BJ (cell line): ENCODE measurements at regions of chr6 and their contacts with region 1.

Region 1: DNA sequence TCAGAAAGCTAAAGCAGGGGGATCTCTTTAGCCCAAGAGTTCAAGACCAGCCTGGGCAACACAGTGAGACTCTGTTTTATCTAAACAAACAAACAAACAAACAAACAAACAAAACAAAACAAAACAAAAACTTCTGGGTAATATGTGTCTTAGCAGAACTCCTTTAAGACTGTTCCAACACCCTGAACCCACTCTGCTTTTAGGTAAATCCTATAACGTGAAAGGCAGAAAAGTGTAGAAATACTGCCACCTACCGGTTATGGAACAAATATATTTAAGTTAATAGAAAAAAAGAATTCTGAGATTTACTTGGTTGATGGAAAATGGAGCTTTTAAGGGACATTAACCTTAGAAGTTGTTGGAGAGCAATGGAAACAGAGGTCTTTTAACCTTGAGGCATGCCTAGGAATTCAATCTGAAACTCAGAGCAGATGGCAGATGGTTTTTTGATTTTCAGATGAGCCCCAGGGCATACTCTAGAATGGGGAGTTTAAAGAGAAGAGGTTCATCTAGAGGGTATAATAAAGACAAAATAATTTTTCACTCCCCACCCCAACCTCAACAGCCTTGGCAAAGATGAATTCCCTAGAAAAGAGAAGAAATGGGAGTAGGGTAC is 38.5 kb downstream of the SOD2 start:
- DNase-seq: peak; percentile 9
- H3K4me3 ChIP-seq: no peak overlapping the region
- H3K27me3 ChIP-seq: no peaks in the 10 kb centered on the region
- CTCF ChIP-seq: peak; percentile 45

Region 2: DNA sequence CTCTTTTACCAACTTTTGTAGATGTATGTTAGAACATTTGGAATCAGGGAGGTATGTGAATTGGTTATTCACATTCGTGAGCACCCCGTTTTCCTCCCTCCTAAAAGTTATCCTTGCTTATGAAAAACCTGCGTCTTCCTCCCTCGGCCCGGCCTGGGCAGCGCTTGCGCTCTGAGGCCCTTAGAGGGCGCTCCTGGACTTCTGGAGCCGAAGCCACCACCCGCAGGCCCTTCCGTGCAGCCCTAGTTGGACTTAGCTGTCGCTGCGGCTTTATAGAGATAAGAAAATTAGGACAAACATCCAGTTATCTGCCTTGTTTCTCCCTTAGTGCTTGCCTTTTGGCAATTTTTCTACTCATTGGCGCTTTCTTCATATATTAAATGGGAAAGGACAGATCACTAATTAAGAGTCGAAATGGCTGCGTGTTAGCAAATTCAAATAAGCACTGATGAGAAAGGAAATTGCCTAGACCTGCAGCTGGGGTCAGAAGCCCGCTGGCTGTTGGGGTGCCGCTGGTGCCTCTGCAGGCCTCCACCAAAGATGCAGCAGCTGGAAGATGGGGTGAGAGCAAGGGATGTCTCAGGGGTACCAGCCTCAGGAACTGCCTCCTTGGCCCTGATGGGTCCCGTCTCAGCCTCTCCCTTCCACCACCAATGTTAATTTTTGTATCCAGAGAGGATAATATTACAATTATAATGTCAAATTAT is 480.2 kb before region 1 on chr6:
- CTCF ChIA-PET with region 1: interaction called, 90 read pairs
- POLR2A ChIA-PET with region 1: no interaction called
- DNase-seq: no peak
- H3K4me3 ChIP-seq: no peak overlapping the region
- H3K27me3 ChIP-seq: peaks cover 13% of the 10 kb centered on the region
- CTCF ChIP-seq: peak; percentile 99

Region 3: DNA sequence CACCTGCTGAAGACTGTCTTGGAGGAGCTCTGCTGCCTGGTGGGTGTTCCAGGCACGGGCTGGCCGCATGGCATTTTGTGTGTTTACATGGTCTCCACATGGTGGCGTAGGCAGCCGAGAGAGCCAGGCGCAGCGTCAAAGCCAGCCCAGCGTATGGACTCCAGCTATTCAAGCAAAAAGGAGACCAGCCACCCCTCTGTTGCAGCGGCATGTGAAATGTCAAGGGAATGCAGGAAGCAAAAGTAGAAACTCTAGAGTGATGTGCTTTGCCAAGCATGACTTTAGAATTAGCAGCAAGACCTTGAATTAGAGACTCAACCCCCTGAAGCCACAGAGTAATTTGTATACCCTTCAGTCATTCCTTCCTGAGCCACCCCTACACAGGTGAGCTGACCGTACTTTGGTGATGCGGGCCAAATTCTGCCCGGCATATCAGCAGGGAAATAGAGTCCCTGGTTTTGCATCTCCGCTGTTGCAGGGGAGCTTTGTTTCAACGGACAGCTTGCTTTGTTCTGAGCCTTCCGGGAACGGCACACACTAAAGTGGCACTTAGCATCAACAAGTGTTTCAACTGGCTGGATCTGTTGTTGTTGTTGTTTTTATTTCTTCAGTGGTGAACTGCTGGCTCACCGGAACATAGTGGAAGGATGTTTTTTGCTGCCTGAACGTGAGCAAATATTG is 436.9 kb before region 1 on chr6:
- CTCF ChIA-PET with region 1: interaction called, 14 read pairs
- POLR2A ChIA-PET with region 1: no interaction called
- DNase-seq: no peak
- H3K4me3 ChIP-seq: no peak overlapping the region
- H3K27me3 ChIP-seq: peaks cover 3% of the 10 kb centered on the region; the same call in 1 of the 2 replicates
- CTCF ChIP-seq: peak; percentile 59

Region 4: DNA sequence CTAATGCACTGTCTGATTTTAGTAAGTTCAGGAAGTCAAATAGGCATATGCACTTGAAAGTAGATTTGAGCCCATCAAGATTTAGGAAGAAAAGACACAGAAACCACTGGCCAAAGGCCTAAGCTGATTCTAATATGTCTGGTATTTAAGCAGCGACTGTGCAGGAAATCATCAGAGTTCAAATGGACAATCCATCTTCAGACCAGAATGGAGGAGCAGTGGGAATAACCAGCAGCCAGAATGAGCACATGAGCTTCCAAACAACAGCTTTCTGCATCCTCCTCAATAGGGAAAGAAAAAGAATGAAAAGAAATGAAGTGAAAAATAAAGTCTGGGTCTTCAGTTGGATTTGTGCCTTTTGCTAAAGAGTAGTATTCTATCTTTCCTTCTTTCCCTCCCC is 12.1 kb before region 1 on chr6:
- CTCF ChIA-PET with region 1: interaction called, 15 read pairs
- POLR2A ChIA-PET with region 1: no interaction called
- DNase-seq: no peak
- H3K4me3 ChIP-seq: no peak overlapping the region
- H3K27me3 ChIP-seq: no peaks in the 10 kb centered on the region
- CTCF ChIP-seq: no peak

Region 5: GRCh38 chr6:159676890-159677505 is 22.4 kb after region 1 on chr6:
- CTCF ChIA-PET with region 1: interaction called, 10 read pairs
- POLR2A ChIA-PET with region 1: no interaction called
- DNase-seq: no peak
- H3K4me3 ChIP-seq: no peak overlapping the region
- H3K27me3 ChIP-seq: no peaks in the 10 kb centered on the region
- CTCF ChIP-seq: no peak